ENCODE measurements at regions of chr21 and their contacts with region 1.

Region 1: DNA sequence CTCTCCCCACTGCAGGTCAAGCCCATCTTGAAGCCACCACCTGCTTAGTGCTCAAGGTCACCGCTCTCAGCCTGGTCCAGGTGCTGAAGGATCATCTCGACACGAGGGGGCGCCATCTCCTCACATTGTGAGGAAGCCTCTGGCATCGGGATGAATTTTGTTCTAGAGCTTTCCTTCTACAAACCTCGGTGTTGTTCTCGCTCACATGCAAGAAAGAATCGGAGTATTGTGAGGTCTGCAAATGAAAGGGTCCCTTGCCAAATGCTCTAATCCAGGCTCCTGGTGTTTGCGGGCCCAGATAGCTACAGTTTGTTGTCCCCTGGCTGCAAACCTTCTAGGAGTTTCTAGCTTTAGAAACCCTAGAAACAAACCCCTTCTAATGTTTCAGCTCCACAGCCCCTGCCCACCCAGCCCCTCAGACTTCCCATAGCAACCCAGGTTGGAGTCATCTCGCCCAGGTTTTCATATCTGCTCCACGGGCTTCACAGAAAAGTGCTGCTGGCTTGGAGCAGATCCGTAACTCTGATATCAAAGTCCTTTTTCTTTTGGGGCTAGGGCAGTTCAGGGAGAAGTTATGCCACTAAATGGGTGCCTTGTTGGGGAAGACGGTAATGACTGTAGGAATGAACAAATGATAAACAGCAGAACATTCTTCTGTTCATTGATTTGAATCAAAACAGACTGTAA is 8.6 kb upstream of the ATP5PO start:
- DNase-seq: peak; percentile 48 to 76
- ATAC-seq: peak; percentile 98
- H3K4me3 ChIP-seq: no peak overlapping the region
- H3K27ac ChIP-seq: peak overlapping the region; percentile 39 to 67; a peak in 3 of 6 replicates
- H3K4me1 ChIP-seq: peaks cover 5% of the 10 kb centered on the region; the same call in 1 of the 3 replicates
- CTCF ChIP-seq: peak; percentile 73
- EP300 ChIP-seq: no peak
- POLR2A ChIP-seq: no peak
- RAD21 ChIP-seq: peak; percentile 94

Region 2: DNA sequence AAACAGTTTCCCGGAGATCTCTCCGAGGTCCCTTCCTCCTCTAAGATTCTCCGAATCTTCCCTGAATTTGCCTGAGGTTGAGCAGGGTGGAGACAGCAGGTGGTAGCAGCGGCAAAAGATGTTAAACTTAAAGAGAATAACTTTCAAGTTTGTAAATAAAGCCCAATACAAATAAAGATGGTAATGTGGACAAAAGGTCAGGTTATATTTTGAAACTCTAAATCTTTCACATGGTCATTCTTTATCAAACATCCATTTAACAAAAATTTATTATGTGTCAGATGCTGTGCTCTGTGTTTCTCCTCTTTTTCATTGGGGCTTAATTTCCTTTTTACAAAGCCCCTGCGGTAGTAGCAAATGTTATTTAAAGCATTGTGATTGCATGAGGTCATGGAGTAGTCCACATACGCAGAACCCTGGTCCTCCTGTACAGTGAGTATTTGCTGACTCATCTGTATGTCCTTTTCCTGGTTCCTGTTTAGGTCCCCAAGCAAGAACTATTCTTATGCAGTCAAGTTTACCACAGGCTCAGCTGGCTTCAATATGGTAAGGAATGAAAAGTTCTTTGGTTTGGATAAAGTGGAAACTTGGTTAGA is 162.7 kb before region 1 on chr21:
- CTCF ChIA-PET with region 1: no interaction called
- POLR2A ChIA-PET with region 1: no interaction called
- DNase-seq: peak; percentile 46 to 90
- ATAC-seq: peak; percentile 96 to 98
- H3K4me3 ChIP-seq: peak overlapping the region; percentile 28; the same call in 1 of the 3 replicates
- H3K27ac ChIP-seq: peak overlapping the region; percentile 77 to 87
- H3K4me1 ChIP-seq: peaks cover 27% of the 10 kb centered on the region; the same call in 2 of the 3 replicates
- CTCF ChIP-seq: no peak
- EP300 ChIP-seq: no peak
- POLR2A ChIP-seq: no peak
- RAD21 ChIP-seq: no peak

Region 3: GRCh38 chr21:33947451-33948095 is 23.4 kb after region 1 on chr21:
- CTCF ChIA-PET with region 1: interaction called, 38 read pairs
- POLR2A ChIA-PET with region 1: no interaction called
- DNase-seq: peak; percentile 89 to 91
- ATAC-seq: peak; percentile 98 to 99
- H3K4me3 ChIP-seq: peak overlapping the region; percentile 33
- H3K27ac ChIP-seq: peak overlapping the region; percentile 65 to 83
- H3K4me1 ChIP-seq: peaks cover 19% of the 10 kb centered on the region
- CTCF ChIP-seq: no peak
- EP300 ChIP-seq: no peak
- POLR2A ChIP-seq: no peak
- RAD21 ChIP-seq: no peak

Region 4: GRCh38 chr21:34061983-34062382 is 137.8 kb after region 1 on chr21:
- CTCF ChIA-PET with region 1: interaction called, 10 read pairs
- POLR2A ChIA-PET with region 1: no interaction called
- DNase-seq: peak in 1 of 2 experiments; percentile 27
- ATAC-seq: peak in 1 of 2 experiments; percentile 71; a peak in 3 of 6 replicates
- H3K4me3 ChIP-seq: no peak overlapping the region
- H3K27ac ChIP-seq: no peak overlapping the region
- H3K4me1 ChIP-seq: no peaks in the 10 kb centered on the region
- CTCF ChIP-seq: no peak
- EP300 ChIP-seq: no peak
- POLR2A ChIP-seq: no peak
- RAD21 ChIP-seq: no peak

Region 5: GRCh38 chr21:34078915-34079314 is 154.7 kb after region 1 on chr21:
- CTCF ChIA-PET with region 1: interaction called, 20 read pairs
- POLR2A ChIA-PET with region 1: interaction called, 11 read pairs
- DNase-seq: no peak
- ATAC-seq: no peak
- H3K4me3 ChIP-seq: no peak overlapping the region
- H3K27ac ChIP-seq: no peak overlapping the region
- H3K4me1 ChIP-seq: peaks cover 20% of the 10 kb centered on the region
- CTCF ChIP-seq: no peak
- EP300 ChIP-seq: no peak
- POLR2A ChIP-seq: no peak
- RAD21 ChIP-seq: no peak

Region 6: DNA sequence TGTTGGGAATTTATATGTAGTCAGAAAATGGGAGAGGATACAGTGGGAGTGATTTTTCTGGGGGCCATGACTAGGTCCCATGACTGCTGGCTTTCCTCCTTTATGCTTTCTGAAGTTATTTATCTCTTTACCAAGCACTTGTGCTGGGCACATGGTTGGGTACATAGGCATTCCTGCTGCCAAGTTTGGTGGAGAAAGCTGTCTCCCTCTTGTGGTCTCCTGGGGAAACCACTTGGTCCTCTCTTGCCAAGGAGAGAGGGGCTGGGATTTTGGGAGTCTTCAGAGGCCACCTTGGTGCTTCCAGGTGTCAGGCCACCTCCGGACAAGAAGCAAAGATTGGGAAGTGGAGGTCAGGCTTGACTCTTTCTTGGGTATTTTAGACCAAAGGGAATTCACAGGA is 319.3 kb after region 1 on chr21:
- CTCF ChIA-PET with region 1: interaction called, 16 read pairs
- POLR2A ChIA-PET with region 1: no interaction called
- DNase-seq: peak in 1 of 2 experiments; percentile 16
- ATAC-seq: peak in 1 of 2 experiments; percentile 54; a peak in 2 of 6 replicates
- H3K4me3 ChIP-seq: no peak overlapping the region
- H3K27ac ChIP-seq: no peak overlapping the region
- H3K4me1 ChIP-seq: no peaks in the 10 kb centered on the region
- CTCF ChIP-seq: no peak
- EP300 ChIP-seq: no peak
- POLR2A ChIP-seq: no peak
- RAD21 ChIP-seq: peak; percentile 18 to 40; a peak in 3 of 5 replicates

Region 7: GRCh38 chr21:34362136-34362444 is 437.9 kb after region 1 on chr21:
- CTCF ChIA-PET with region 1: interaction called, 239 read pairs
- POLR2A ChIA-PET with region 1: no interaction called
- DNase-seq: no peak
- ATAC-seq: peak in 1 of 2 experiments; percentile 23; a peak in 2 of 6 replicates
- H3K4me3 ChIP-seq: no peak overlapping the region
- H3K27ac ChIP-seq: no peak overlapping the region
- H3K4me1 ChIP-seq: 0 out of 3 replicates have a peak, but pooled peaks cover 2% of the 10 kb centered on the region
- CTCF ChIP-seq: no peak; the same call in 2 of the 3 replicates
- EP300 ChIP-seq: no peak
- POLR2A ChIP-seq: no peak
- RAD21 ChIP-seq: no peak; a peak in 1 of 5 replicates

Measured in A549 (cell line).